CD4-positive, alpha-beta T cell (primary cell): ENCODE measurements at regions of chr15 and their contacts with region 1.

Region 1: GRCh38 chr15:31435261-31435911 is 108.8 kb downstream of the KLF13 start:
- DNase-seq: peak; percentile 61 to 93 (median 80)
- ATAC-seq: peak; percentile 75
- H3K4me3 ChIP-seq: peak overlapping the region; percentile 55
- H3K4me3 Mint-ChIP-seq: peak overlapping the region; percentile 84
- H3K27ac ChIP-seq: peak overlapping the region; percentile 88 to 92
- H3K27ac Mint-ChIP-seq: peak overlapping the region; percentile 98
- H3K4me1 ChIP-seq: peaks cover 78% of the 10 kb centered on the region
- H3K4me1 Mint-ChIP-seq: peaks cover 76% of the 10 kb centered on the region
- H3K27me3 ChIP-seq: no peaks in the 10 kb centered on the region
- H3K27me3 Mint-ChIP-seq: no peaks in the 10 kb centered on the region
- CTCF ChIP-seq: peak; percentile 45

Region 2: DNA sequence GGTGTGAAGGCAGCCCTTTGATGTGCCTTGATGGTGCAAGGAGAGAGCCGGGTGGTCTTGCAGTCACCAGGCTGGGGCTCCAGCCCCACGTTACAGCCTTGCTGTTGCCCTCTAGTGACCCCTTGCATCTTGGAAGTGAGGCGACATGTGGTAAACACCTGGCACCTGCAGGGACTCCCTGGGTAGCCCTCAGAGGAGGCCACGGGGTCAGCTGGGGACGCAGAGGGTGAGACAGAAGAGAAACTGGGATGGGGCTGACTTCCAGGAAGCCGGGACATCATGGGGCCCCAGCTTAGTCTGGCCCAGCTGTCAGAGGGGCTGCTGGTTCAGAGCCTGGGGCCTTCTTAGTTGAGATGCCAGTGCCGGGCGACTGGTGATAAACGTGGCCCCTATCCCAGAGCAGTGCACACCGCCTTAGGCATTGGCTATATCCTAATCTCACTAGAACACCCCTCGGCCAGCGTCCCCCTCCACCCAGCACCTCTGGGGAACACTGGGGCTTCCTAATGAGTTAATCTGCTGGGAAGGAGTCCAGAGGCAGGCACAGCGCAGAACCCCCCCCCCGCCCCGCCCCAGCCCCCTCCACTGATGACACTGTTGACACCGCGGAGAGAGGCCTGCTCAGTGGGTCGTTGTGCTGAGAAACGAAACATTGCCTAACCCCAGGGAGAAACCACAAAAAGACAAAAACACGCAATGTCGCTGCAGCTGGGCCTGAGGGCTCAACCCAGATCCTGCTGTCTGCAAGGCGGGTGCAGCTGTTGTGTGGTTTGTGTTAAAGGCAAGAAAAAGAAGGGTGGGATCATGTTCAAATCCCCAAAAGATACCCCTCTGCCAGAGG is 169.3 kb before region 1 on chr15:
- CTCF ChIA-PET with region 1: no interaction called
- POLR2A ChIA-PET with region 1: interaction called, 14 read pairs
- intact Hi-C with region 1: loop called in 1 of 2 experiments (anchors 5 kb)
- DNase-seq: peak; percentile 58 to 90 (median 76)
- ATAC-seq: peak; percentile 86
- H3K4me3 ChIP-seq: no peak overlapping the region
- H3K4me3 Mint-ChIP-seq: peak overlapping the region; percentile 71
- H3K27ac ChIP-seq: peak overlapping the region; percentile 79 to 85
- H3K27ac Mint-ChIP-seq: peak overlapping the region; percentile 98
- H3K4me1 ChIP-seq: peaks cover 97% of the 10 kb centered on the region
- H3K4me1 Mint-ChIP-seq: peaks cover 98% of the 10 kb centered on the region
- H3K27me3 ChIP-seq: no peaks in the 10 kb centered on the region
- H3K27me3 Mint-ChIP-seq: no peaks in the 10 kb centered on the region
- CTCF ChIP-seq: no peak

Region 3: GRCh38 chr15:31352911-31353811 is 82.2 kb before region 1 on chr15:
- CTCF ChIA-PET with region 1: interaction called, 4 read pairs
- POLR2A ChIA-PET with region 1: interaction called, 216 read pairs
- intact Hi-C with region 1: no loop called
- DNase-seq: peak in 6 of 14 experiments; percentile 48 to 77 (median 64)
- ATAC-seq: peak; percentile 57
- H3K4me3 ChIP-seq: peak overlapping the region; percentile 21
- H3K4me3 Mint-ChIP-seq: peak overlapping the region; percentile 85
- H3K27ac ChIP-seq: peak overlapping the region; percentile 78 to 93
- H3K27ac Mint-ChIP-seq: peak overlapping the region; percentile 90
- H3K4me1 ChIP-seq: peaks cover 100% of the 10 kb centered on the region
- H3K4me1 Mint-ChIP-seq: peaks cover 97% of the 10 kb centered on the region
- H3K27me3 ChIP-seq: no peaks in the 10 kb centered on the region
- H3K27me3 Mint-ChIP-seq: no peaks in the 10 kb centered on the region
- CTCF ChIP-seq: no peak

Region 4: DNA sequence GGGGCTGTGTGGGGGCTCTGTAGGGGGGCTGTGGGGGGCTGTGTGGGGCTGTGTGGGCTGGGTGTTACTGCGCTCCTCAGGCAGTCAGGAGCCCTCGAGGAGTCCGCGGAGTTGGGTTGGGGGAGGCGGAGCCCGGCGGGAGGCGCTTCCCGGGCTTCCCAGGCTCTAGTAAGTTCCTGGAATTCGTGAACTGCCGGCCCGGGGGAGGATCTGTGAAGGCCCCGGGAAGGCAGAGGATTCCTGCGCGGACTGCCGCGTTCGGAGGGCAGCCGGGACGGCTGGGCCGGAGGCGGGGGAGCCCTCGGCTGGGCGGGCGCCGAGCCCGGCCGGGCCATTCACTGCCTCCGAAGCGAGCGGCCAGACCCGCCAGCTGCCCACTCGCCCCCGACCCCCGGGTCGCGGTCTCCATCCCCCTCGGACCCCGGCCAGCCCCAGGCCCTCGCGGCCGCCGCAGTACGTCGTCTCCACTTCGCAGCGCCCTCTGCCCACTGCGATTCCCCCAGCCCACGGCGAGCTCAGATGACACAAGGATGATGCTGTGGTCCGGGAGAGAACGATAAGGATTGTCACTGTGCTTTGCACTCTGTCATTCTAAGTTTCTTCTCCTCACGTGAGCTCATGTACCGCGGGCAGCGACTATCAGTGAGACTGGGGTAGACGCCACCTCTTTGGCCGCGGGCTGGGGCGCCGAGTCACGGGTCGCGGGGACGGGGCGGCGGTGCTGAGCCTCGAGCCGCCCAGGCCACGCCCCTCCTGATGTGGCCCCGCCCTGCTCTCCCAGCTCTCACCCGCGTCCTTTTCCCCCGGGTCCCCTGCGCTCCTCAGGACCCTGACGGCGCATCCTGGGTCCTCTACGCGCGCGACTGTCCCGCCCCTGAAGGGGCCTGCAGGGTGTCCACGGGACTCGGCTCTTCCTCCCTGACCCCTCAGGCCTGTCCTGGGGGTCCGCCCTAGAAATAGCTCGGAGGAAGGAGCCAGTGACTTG is 43.4 kb before region 1 on chr15:
- CTCF ChIA-PET with region 1: interaction called, 5 read pairs
- POLR2A ChIA-PET with region 1: interaction called, 42 read pairs
- intact Hi-C with region 1: loop called (anchors 2 to 5 kb)
- DNase-seq: peak; percentile 65 to 93 (median 82)
- ATAC-seq: peak; percentile 87
- H3K4me3 ChIP-seq: peak overlapping the region; percentile 75
- H3K4me3 Mint-ChIP-seq: peak overlapping the region; percentile 95
- H3K27ac ChIP-seq: peak overlapping the region; percentile 8 to 37
- H3K27ac Mint-ChIP-seq: peak overlapping the region; percentile 86
- H3K4me1 ChIP-seq: peaks cover 51% of the 10 kb centered on the region
- H3K4me1 Mint-ChIP-seq: peaks cover 52% of the 10 kb centered on the region
- H3K27me3 ChIP-seq: no peaks in the 10 kb centered on the region
- H3K27me3 Mint-ChIP-seq: no peaks in the 10 kb centered on the region
- CTCF ChIP-seq: no peak

Region 5: GRCh38 chr15:31412824-31413223 is 22.6 kb before region 1 on chr15:
- CTCF ChIA-PET with region 1: no interaction called
- POLR2A ChIA-PET with region 1: interaction called, 14 read pairs
- intact Hi-C with region 1: no loop called
- DNase-seq: no peak
- ATAC-seq: no peak
- H3K4me3 ChIP-seq: no peak overlapping the region
- H3K4me3 Mint-ChIP-seq: no peak overlapping the region
- H3K27ac ChIP-seq: no peak overlapping the region
- H3K27ac Mint-ChIP-seq: no peak overlapping the region
- H3K4me1 ChIP-seq: no peaks in the 10 kb centered on the region
- H3K4me1 Mint-ChIP-seq: no peaks in the 10 kb centered on the region
- H3K27me3 ChIP-seq: no peaks in the 10 kb centered on the region
- H3K27me3 Mint-ChIP-seq: no peaks in the 10 kb centered on the region
- CTCF ChIP-seq: no peak

Region 6: GRCh38 chr15:31483053-31483985 is 47.9 kb after region 1 on chr15:
- CTCF ChIA-PET with region 1: interaction called, 19 read pairs
- POLR2A ChIA-PET with region 1: interaction called, 105 read pairs
- intact Hi-C with region 1: loop called in 1 of 2 experiments (anchors 2 kb)
- DNase-seq: peak in 13 of 14 experiments; percentile 25 to 85 (median 48)
- ATAC-seq: peak; percentile 67
- H3K4me3 ChIP-seq: peak overlapping the region; percentile 57
- H3K4me3 Mint-ChIP-seq: peak overlapping the region; percentile 99
- H3K27ac ChIP-seq: no peak overlapping the region
- H3K27ac Mint-ChIP-seq: peak overlapping the region; percentile 94
- H3K4me1 ChIP-seq: peaks cover 48% of the 10 kb centered on the region
- H3K4me1 Mint-ChIP-seq: peaks cover 48% of the 10 kb centered on the region
- H3K27me3 ChIP-seq: no peaks in the 10 kb centered on the region
- H3K27me3 Mint-ChIP-seq: no peaks in the 10 kb centered on the region
- CTCF ChIP-seq: no peak